ENCODE measurements at regions of chr2 and their contacts with region 1.

Region 1: DNA sequence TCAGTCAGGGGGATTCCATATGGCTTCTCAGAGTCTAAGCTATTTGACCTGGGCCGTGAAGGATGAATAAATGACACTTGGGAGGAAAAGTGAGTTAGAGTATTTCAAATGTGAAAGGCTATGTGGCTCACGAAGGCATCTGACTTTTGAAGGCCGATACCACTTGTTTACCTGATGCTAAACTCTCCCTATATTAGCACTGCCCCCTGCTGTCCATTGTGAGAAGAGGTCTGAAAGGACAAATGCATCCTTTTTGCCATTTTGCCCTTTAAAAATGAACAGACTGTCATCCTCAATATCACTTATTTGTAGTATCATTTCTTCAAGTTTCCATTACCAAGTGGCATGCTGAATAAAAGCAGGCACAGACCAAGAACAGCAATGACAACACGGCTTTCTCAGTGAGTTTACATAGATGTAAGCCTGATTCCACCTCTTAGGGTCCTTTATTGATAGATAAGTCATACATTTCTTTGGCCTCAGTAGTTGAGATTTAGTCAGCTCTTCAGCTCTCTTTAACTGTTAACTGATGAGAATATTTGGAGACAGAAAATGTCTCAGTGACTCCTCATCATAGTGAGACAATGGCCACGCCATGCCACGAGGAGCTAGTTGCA is 40.1 kb downstream of the DOCK10 start:
- DNase-seq: peak; percentile 57
- CTCF ChIP-seq: peak; percentile 79

Region 2: GRCh38 chr2:224922142-224922727 is 79.9 kb before region 1 on chr2:
- CTCF ChIA-PET with region 1: interaction called, 24 read pairs
- POLR2A ChIA-PET with region 1: no interaction called
- DNase-seq: peak; percentile 50
- CTCF ChIP-seq: no peak

Region 3: DNA sequence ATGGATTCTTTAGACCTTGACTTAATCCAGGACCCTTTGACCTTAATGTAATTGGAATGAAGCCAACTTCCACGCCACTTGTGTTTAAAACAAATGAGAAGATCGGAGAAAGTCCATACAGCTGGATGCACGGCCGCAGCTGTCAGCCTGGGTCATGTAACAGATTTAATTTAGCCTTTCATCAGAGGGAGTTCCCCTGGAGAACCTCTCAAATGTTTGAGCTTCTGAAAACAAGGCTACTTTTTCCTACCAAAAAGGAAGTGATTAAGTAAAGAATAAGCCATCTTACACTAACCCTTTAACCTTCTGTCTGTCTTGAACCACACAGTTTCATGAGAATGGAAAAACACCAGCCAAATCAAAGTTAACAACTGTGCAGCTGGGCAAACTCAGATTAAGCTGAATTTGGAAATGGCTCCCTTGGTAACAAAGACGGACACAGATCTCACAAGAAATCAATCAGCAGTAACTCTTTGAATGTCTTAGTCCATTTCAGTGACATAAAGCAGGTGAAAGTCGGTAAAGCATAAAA is 63.4 kb before region 1 on chr2:
- CTCF ChIA-PET with region 1: interaction called, 59 read pairs
- POLR2A ChIA-PET with region 1: no interaction called
- DNase-seq: no peak
- CTCF ChIP-seq: no peak

Region 4: GRCh38 chr2:224957540-224958461 is 44.3 kb before region 1 on chr2:
- CTCF ChIA-PET with region 1: interaction called, 15 read pairs
- POLR2A ChIA-PET with region 1: no interaction called
- DNase-seq: peak; percentile 71
- CTCF ChIP-seq: no peak

Region 5: DNA sequence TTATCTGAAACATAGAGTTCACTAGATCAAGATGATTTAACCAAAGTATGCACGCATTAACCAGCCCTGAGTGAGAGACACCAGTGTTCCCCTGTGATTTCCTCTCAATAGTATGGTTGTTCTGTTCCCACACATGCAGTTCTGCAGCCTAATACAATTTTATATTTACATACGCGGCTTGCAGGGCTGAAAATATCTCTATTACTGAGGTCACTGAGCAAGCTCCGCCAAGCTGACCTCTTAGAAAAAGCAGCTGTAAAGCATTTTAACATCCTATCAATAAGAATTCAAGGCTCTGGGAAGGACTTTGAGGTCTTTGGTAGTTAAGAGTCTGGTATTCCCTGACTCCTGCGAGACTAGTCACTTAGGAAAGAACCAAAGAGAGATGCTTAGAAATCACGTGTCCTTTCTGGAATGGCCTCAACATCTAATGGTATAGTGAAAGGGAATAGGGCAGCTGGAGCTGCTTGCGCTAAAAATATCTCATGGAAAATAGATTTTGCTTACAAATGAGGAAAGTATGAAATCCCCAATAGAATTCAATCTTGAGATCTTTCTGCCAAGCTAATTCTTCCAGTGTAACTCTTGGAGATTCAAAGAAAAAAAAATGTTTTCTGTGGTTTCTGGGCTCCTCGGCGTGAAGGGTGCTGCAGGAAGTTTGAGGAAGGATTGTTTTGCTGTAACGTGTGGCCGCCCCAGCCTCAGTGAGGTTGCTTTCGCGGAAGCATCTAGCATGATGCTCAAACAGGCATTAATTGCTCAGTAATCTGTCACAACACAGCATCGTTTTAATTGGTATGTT is 19.0 kb before region 1 on chr2:
- CTCF ChIA-PET with region 1: interaction called, 113 read pairs
- POLR2A ChIA-PET with region 1: no interaction called
- DNase-seq: no peak
- CTCF ChIP-seq: no peak

Region 6: GRCh38 chr2:225025917-225026571 is 23.9 kb after region 1 on chr2:
- CTCF ChIA-PET with region 1: interaction called, 21 read pairs
- POLR2A ChIA-PET with region 1: interaction called, 8 read pairs
- DNase-seq: no peak
- CTCF ChIP-seq: no peak

Region 7: DNA sequence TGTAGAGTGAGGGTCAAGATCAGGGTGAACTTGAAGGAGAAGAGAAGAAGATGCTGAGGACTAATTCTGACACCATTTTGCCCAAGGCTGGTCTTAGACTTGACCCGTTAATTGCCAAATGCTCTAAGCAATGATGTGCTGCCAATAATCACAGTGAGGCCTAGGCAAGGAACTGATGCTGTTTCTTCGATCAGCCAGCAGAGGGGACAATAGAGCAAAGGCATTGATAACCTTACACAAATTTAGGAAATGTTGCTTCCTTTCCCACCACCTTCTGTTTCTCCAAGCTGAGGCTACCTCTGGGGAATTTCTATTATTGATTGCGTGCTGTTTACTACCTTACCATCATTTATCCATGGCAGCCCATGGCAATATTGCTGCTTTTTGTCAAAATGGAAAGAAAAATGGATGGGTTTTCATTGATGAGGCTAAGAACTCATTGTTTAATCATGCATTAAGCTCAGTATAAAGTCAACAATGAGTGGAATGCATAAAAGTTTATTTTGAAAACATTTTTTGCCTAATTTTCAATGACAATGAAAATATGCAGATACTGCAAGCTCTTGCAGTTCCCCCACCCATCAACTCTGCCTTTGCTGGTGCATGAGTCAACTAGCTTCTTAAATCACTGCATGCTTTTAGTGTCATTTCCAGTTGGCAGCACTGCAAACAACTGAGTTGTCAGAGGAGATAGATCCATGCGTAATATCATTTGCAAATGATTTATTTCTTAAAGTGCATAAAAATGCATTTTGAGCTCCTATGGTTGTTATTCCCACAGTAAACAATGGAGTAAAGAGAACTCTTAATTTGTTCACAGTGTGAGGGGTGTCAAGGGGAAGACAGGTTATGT is 280.9 kb after region 1 on chr2:
- CTCF ChIA-PET with region 1: no interaction called
- POLR2A ChIA-PET with region 1: no interaction called
- DNase-seq: peak; percentile 37
- CTCF ChIP-seq: peak; percentile 65

Measured in GM10248 (cell line).